GM18951 (cell line): ENCODE measurements at regions of chr20 and their contacts with region 1.

Region 1: GRCh38 chr20:57089691-57090150 is 176.7 kb downstream of the BMP7 start:
- POLR2A ChIP-seq: no peak

Region 2: DNA sequence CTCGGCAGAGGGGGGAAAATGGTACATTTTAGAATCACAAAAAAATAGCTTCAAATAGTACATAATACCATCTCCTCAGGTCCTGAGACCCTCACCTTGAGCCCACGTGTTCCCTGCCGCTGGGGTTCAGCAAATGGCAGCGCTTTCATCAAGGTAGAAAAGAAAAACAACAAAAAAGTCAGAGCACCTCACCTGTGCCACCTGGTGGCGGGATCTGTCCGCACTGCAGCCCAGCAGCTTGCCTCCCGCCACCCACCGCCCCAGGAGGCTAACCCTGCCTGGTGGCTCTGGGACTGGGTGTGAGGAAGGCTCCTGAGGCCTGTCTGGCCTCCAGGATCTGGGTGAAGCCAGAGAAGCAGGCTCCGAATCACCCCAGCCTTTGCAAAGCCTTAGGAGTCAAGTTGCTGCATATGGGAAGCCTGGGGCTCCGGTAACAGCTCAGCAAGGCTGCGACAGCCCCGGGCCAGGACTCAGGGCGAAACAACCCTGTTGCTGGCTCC is 94.1 kb before region 1 on chr20:
- in situ Hi-C with region 1: no loop called
- POLR2A ChIP-seq: no peak

Region 3: DNA sequence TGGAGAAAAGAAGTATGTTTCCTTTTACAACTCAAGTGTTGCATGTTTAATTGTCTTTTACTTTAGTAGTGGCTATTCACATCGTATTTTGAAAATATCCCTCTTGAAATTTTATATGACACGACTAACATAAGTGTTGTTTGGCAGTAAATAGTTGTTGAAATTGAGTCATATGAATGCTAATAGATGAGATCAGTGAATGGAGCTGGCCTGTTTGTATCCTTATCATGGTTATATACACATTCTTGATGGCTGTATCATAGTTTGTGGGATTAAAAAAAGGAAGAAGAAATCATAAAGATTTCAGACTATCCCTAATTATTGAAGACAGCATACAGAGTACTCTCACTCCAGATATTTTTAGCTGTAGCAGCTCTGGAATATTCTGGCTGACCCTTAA is 253.1 kb after region 1 on chr20:
- in situ Hi-C with region 1: loop called (anchors 5 kb)
- POLR2A ChIP-seq: no peak

Region 4: GRCh38 chr20:57560554-57561355 is 471.0 kb after region 1 on chr20 and contains the start of gene PCK1:
- in situ Hi-C with region 1: loop called (anchors 25 kb)
- POLR2A ChIP-seq: no peak